PC-9 (cell line): ENCODE measurements at regions of chr18 and their contacts with region 1.

Region 1: DNA sequence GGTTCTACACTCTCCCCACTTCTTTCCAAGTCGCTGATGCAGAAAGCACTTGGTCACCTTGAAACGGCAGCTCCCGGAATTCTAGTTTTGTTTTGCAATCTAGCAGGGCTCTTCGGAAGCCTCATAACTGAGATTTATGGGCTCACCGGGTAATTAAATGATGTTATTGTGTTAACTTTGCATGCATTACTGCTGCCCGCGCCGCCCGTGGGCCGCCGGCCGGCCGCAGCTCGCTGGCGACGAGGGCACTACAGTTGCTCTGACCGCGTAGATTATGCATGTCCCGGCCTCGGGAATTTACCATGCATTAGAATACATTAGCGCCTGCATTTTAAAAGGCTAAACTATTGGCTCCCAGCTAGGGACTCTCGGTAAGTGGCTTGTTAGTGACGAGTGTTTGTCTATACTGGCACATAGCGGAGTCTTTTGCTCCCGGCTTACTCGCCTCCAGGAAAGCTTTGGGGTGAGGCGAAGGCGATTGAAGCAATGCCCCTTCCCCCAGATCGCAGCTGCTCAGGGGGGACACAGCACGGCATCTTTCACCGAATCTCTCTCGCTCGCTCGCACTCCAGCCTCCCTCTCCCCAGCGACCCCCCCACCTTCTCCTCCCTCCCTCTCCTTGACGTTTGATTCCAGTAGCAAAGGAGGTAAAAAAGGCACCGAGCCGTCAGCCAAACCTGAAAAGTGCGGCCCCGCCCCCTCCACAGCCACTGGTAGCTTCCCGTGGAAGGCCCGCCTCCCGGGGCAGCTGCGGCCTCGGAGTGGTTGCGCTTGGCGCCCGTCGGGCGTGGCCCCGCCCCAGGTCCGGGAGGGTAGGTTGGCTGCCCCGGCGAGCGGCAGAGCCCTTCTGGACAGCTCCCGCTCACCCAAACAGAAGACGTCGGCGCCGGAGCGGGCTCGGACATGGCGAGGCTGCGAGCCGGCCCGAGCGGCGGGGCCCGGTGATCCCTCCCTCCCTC is at the start of gene ONECUT2:
- DNase-seq: peak; percentile 86 to 91
- H3K4me3 ChIP-seq: peak within 1 kb of the TSS; percentile 90
- H3K27ac ChIP-seq: no peak within 1 kb of the TSS
- H3K4me1 ChIP-seq: peaks cover 24% of the 10 kb centered on the region
- H3K27me3 ChIP-seq: no peaks in the 10 kb centered on the region
- CTCF ChIP-seq: no peak
- total RNA-seq, gene ONECUT2: 0.35 and 0.40 TPM in 2 replicates

Region 2: DNA sequence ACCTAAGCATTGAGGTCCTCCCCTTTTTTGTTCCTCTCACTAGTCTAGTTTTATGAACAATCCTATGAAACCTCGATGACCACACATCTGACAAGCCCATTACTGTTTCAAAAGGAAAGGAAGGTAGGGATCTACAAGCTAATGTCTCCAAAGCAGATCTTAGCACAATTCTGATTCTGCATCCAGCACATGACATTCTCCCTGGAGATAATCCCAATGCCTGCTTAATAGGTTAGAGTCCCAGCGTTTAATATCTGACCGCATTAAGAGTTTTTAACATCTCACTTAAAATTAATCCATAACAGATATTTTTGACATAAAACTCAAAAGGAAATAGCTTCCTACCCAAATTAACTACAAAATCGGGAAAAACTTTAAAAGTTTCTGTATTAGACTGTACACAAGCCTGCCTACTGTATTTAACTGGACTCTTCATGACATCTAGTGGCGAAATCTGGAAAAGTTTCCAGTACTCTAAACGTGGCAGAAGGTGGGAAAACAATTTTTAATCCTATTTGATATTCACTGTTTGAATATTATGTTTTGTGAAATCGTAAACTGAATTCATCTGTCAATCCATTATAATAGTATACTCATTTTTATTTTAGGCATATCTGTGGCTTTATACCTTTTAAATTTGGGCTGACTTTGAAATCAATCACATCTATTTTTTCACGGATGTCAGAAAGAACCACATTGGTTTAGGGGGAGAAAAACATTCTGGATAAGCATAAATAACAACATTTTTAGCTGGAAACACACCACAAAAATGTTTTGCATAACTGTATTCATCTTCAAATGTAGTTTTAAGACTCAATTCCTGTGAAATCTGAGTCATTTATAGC is 858.8 kb before region 1 on chr18:
- CTCF ChIA-PET with region 1: no interaction called
- POLR2A ChIA-PET with region 1: no interaction called
- intact Hi-C with region 1: loop called (anchors 10 kb)
- DNase-seq: no peak
- H3K4me3 ChIP-seq: no peak overlapping the region
- H3K27ac ChIP-seq: no peak overlapping the region
- H3K4me1 ChIP-seq: no peaks in the 10 kb centered on the region
- H3K27me3 ChIP-seq: no peaks in the 10 kb centered on the region
- CTCF ChIP-seq: peak; percentile 86

Region 3: GRCh38 chr18:56869189-56869777 is 565.5 kb before region 1 on chr18:
- CTCF ChIA-PET with region 1: no interaction called
- POLR2A ChIA-PET with region 1: no interaction called
- intact Hi-C with region 1: loop called (anchors 2 kb)
- DNase-seq: peak in 1 of 2 experiments; percentile 56
- H3K4me3 ChIP-seq: no peak overlapping the region
- H3K27ac ChIP-seq: no peak overlapping the region
- H3K4me1 ChIP-seq: no peaks in the 10 kb centered on the region
- H3K27me3 ChIP-seq: no peaks in the 10 kb centered on the region
- CTCF ChIP-seq: peak; percentile 85

Region 4: GRCh38 chr18:57569133-57569532 is 134.3 kb after region 1 on chr18:
- CTCF ChIA-PET with region 1: no interaction called
- POLR2A ChIA-PET with region 1: no interaction called
- intact Hi-C with region 1: no loop called
- DNase-seq: no peak
- H3K4me3 ChIP-seq: no peak overlapping the region
- H3K27ac ChIP-seq: no peak overlapping the region
- H3K4me1 ChIP-seq: no peaks in the 10 kb centered on the region
- H3K27me3 ChIP-seq: no peaks in the 10 kb centered on the region
- CTCF ChIP-seq: no peak

Region 5: DNA sequence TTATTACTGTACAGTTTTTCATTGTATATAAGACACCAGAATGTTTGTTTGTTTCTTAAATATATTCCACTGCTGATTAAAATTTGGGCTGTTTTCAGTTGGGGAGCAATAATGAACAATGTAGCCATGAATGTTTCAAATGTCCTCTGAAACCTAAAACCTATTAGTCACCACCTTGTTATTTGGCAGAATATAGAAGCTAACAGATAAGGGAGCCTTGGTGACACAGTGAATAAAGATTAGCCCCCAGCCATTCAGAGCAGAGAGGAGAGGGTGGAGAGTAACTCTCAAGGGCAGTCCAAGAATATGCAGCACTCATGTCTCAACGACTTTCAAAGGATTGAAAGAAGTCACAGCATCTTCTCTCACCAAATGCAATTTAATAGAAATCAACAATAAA is 411.4 kb after region 1 on chr18:
- CTCF ChIA-PET with region 1: no interaction called
- POLR2A ChIA-PET with region 1: no interaction called
- intact Hi-C with region 1: no loop called
- DNase-seq: peak; percentile 56 to 94
- H3K4me3 ChIP-seq: no peak overlapping the region
- H3K27ac ChIP-seq: peak overlapping the region; percentile 67
- H3K4me1 ChIP-seq: peaks cover 32% of the 10 kb centered on the region
- H3K27me3 ChIP-seq: no peaks in the 10 kb centered on the region
- CTCF ChIP-seq: no peak